ENCODE measurements at regions of chr12 and their contacts with region 1.

Region 1: DNA sequence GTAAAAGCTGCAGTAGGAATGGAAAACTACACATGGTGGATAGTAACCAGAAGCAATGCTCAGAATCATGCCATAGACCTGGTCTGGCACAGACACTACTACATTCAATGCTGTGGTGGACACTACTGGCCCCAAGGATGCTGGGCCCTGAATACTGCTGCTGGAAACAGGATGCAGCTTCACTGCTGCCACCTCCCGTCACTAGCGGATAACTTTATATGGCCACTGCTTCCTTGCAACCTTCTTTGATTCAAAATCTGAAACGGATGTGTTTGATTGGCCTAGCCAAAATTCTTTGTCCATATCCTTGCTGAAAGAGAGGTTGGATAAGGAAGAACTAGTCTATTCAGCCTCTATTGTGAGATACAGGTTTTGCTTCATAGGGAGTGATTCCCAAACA is 30.7 kb downstream of the ADCY6 start:
- DNase-seq: no peak
- ATAC-seq: no peak
- H3K4me3 ChIP-seq: no peak overlapping the region
- H3K4me3 Mint-ChIP-seq: no peak overlapping the region
- H3K27ac ChIP-seq: no peak overlapping the region
- H3K27ac Mint-ChIP-seq: no peak overlapping the region
- H3K4me1 ChIP-seq: no peaks in the 10 kb centered on the region
- H3K4me1 Mint-ChIP-seq: no peaks in the 10 kb centered on the region
- H3K27me3 ChIP-seq: no peaks in the 10 kb centered on the region
- H3K27me3 Mint-ChIP-seq: no peaks in the 10 kb centered on the region
- CTCF ChIP-seq: no peak

Region 2: GRCh38 chr12:48580831-48581230 is 177.4 kb before region 1 on chr12:
- CTCF ChIA-PET with region 1: no interaction called
- POLR2A ChIA-PET with region 1: no interaction called
- intact Hi-C with region 1: no loop called
- DNase-seq: no peak
- ATAC-seq: no peak
- H3K4me3 ChIP-seq: no peak overlapping the region
- H3K4me3 Mint-ChIP-seq: no peak overlapping the region
- H3K27ac ChIP-seq: no peak overlapping the region
- H3K27ac Mint-ChIP-seq: no peak overlapping the region
- H3K4me1 ChIP-seq: no peaks in the 10 kb centered on the region
- H3K4me1 Mint-ChIP-seq: peaks cover 6% of the 10 kb centered on the region
- H3K27me3 ChIP-seq: peaks cover 7 to 20% of the 10 kb centered on the region in 2 experiments
- H3K27me3 Mint-ChIP-seq: peaks cover 28% of the 10 kb centered on the region
- CTCF ChIP-seq: no peak

Region 3: GRCh38 chr12:48795480-48796455 is 37.5 kb after region 1 on chr12:
- CTCF ChIA-PET with region 1: interaction called, 53 read pairs
- POLR2A ChIA-PET with region 1: interaction called, 4 read pairs
- intact Hi-C with region 1: loop called (anchors 1 kb)
- DNase-seq: peak; percentile 21 to 76 (median 42)
- ATAC-seq: peak; percentile 79
- H3K4me3 ChIP-seq: no peak overlapping the region
- H3K4me3 Mint-ChIP-seq: no peak overlapping the region
- H3K27ac ChIP-seq: no peak overlapping the region
- H3K27ac Mint-ChIP-seq: no peak overlapping the region
- H3K4me1 ChIP-seq: peaks cover 7% of the 10 kb centered on the region
- H3K4me1 Mint-ChIP-seq: no peaks in the 10 kb centered on the region
- H3K27me3 ChIP-seq: no peaks in the 10 kb centered on the region
- H3K27me3 Mint-ChIP-seq: peaks cover 5% of the 10 kb centered on the region
- CTCF ChIP-seq: peak; percentile 96

Region 4: GRCh38 chr12:48890657-48891418 is 132.6 kb after region 1 on chr12:
- CTCF ChIA-PET with region 1: interaction called, 3 read pairs
- POLR2A ChIA-PET with region 1: no interaction called
- intact Hi-C with region 1: loop called (anchors 2 to 5 kb)
- DNase-seq: peak; percentile 51 to 85 (median 70)
- ATAC-seq: peak; percentile 96
- H3K4me3 ChIP-seq: no peak overlapping the region
- H3K4me3 Mint-ChIP-seq: no peak overlapping the region
- H3K27ac ChIP-seq: no peak overlapping the region
- H3K27ac Mint-ChIP-seq: no peak overlapping the region
- H3K4me1 ChIP-seq: peaks cover 10% of the 10 kb centered on the region
- H3K4me1 Mint-ChIP-seq: peaks cover 5% of the 10 kb centered on the region
- H3K27me3 ChIP-seq: peaks cover 10 to 17% of the 10 kb centered on the region in 2 experiments
- H3K27me3 Mint-ChIP-seq: peaks cover 22% of the 10 kb centered on the region
- CTCF ChIP-seq: peak; percentile 86

Region 5: GRCh38 chr12:48936379-48936979 is 178.3 kb after region 1 on chr12:
- CTCF ChIA-PET with region 1: no interaction called
- POLR2A ChIA-PET with region 1: no interaction called
- intact Hi-C with region 1: loop called in 1 of 2 experiments (anchors 2 kb)
- DNase-seq: peak; percentile 75 to 90 (median 84)
- ATAC-seq: peak; percentile 60
- H3K4me3 ChIP-seq: no peak overlapping the region
- H3K4me3 Mint-ChIP-seq: no peak overlapping the region
- H3K27ac ChIP-seq: no peak overlapping the region
- H3K27ac Mint-ChIP-seq: peak overlapping the region; percentile 32
- H3K4me1 ChIP-seq: peaks cover 55% of the 10 kb centered on the region
- H3K4me1 Mint-ChIP-seq: peaks cover 32% of the 10 kb centered on the region
- H3K27me3 ChIP-seq: no peaks in the 10 kb centered on the region
- H3K27me3 Mint-ChIP-seq: no peaks in the 10 kb centered on the region
- CTCF ChIP-seq: peak; percentile 94

Measured in CD4-positive, alpha-beta T cell (primary cell).